Gastrocnemius medialis (tissue), 4 donors: ENCODE measurements at regions of chr2 and their contacts with region 1.

Region 1: GRCh38 chr2:27954771-27955383 is 64.3 kb downstream of the BABAM2 start:
- DNase-seq: peak; percentile 70 to 78
- ATAC-seq: peak; percentile 90 to 93
- H3K4me3 ChIP-seq: peak overlapping the region in 2 of 4 donors; percentile 3 to 6
- H3K27ac ChIP-seq: peak overlapping the region; percentile 72 to 81 (median 76)
- H3K4me1 ChIP-seq: peaks cover 52 to 57% of the 10 kb centered on the region in 2 donors
- H3K27me3 ChIP-seq: no peaks in the 10 kb centered on the region
- CTCF ChIP-seq: peak in 4 of 5 experiments; percentile 16 to 39 (median 38)
- POLR2A ChIP-seq: no peak

Region 2: GRCh38 chr2:28102455-28102874 is 147.6 kb after region 1 on chr2:
- in situ Hi-C with region 1: no loop called
- intact Hi-C with region 1: loop called (anchors 10 kb)
- DNase-seq: no peak
- ATAC-seq: peak; percentile 67 to 68
- H3K4me3 ChIP-seq: peak overlapping the region in 3 of 4 donors; percentile 20 to 26 (median 24)
- H3K27ac ChIP-seq: peak overlapping the region; percentile 50 to 79 (median 75)
- H3K4me1 ChIP-seq: peaks cover 42 to 43% of the 10 kb centered on the region in 2 donors
- H3K27me3 ChIP-seq: no peaks in the 10 kb centered on the region
- CTCF ChIP-seq: no peak
- POLR2A ChIP-seq: no peak

Region 3: GRCh38 chr2:28398101-28398834 is 443.4 kb after region 1 on chr2:
- in situ Hi-C with region 1: no loop called
- intact Hi-C with region 1: loop called (anchors 2 kb)
- DNase-seq: peak; percentile 75 to 79
- ATAC-seq: peak; percentile 35 to 45
- H3K4me3 ChIP-seq: peak overlapping the region; percentile 76 to 97 (median 88)
- H3K27ac ChIP-seq: peak overlapping the region; percentile 98 to 100 (median 99)
- H3K4me1 ChIP-seq: peaks cover 59% of the 10 kb centered on the region in 2 donors
- H3K27me3 ChIP-seq: no peaks in the 10 kb centered on the region
- CTCF ChIP-seq: no peak
- POLR2A ChIP-seq: peak; percentile 58 to 73

Region 4: DNA sequence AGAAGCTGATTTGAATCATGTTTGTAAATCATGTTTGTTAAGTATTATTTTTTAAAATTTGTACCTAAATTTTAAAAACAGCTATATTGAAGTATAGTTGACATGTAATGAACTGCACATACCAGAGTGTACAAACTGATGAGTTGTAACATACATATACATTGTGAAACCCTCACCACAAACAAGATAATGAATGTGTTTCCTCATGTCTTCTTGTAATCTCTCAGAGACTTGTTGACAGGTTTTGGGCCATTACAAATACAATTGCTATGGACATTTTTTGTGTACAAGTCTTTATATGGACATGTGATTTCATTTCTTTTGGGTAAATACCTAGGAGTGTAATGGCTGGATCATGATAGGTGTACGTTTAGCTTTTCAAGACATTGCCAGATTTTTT is 961.1 kb after region 1 on chr2:
- in situ Hi-C with region 1: no loop called
- intact Hi-C with region 1: no loop called
- DNase-seq: no peak
- ATAC-seq: no peak
- H3K4me3 ChIP-seq: no peak overlapping the region
- H3K27ac ChIP-seq: no peak overlapping the region
- H3K4me1 ChIP-seq: no peaks in the 10 kb centered on the region
- H3K27me3 ChIP-seq: no peaks in the 10 kb centered on the region
- CTCF ChIP-seq: no peak
- POLR2A ChIP-seq: no peak